ENCODE measurements at regions of chr5 and their contacts with region 1.

Region 1: DNA sequence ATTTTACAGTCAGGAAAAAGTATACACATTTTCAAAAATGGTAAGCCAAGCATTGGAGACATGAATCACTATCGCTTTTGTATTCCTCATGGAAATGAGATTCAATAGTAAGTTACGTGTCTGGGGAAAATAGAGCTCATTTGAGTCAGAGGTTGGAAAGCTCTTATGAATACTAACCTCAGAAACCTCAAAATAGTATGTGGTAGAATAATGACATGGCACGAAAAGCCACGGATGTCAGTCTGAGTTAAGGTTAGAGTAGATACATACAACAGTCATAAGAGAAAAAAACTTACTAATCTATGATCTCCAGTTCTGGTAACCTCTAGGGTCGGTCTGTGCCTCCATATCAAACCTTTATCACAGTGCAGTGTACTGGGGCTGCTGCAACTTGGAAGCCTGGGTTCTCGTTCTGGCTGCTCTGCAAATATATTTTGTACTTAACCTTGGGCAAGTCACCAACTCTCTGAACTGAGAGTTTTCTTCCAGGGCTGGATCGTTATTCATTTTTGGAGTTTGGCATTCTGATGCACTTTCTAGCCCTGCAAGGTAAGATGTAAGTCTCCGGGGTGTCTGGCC is 31.8 kb downstream of the MAP1B start:
- DNase-seq: peak; percentile 97
- ATAC-seq: peak; percentile 38
- H3K4me3 ChIP-seq: no peak overlapping the region
- H3K27ac ChIP-seq: peak overlapping the region; percentile 83
- H3K4me1 ChIP-seq: peaks cover 19% of the 10 kb centered on the region
- H3K27me3 ChIP-seq: no peaks in the 10 kb centered on the region
- CTCF ChIP-seq: no peak
- POLR2A ChIP-seq: no peak
- RAD21 ChIP-seq: no peak

Region 2: GRCh38 chr5:72191404-72191803 is 52.4 kb after region 1 on chr5:
- CTCF ChIA-PET with region 1: no interaction called
- POLR2A ChIA-PET with region 1: no interaction called
- dilution Hi-C with region 1: no loop called
- in situ Hi-C with region 1: no loop called
- intact Hi-C with region 1: no loop called
- DNase-seq: no peak
- ATAC-seq: peak; percentile 42
- H3K4me3 ChIP-seq: no peak overlapping the region
- H3K27ac ChIP-seq: no peak overlapping the region
- H3K4me1 ChIP-seq: peaks cover 5% of the 10 kb centered on the region
- H3K27me3 ChIP-seq: no peaks in the 10 kb centered on the region
- CTCF ChIP-seq: no peak
- POLR2A ChIP-seq: no peak
- RAD21 ChIP-seq: no peak

Region 3: GRCh38 chr5:72209515-72210115 is 70.6 kb after region 1 on chr5:
- CTCF ChIA-PET with region 1: no interaction called
- POLR2A ChIA-PET with region 1: no interaction called
- dilution Hi-C with region 1: no loop called
- in situ Hi-C with region 1: no loop called
- intact Hi-C with region 1: loop called (anchors 5 kb)
- DNase-seq: no peak
- ATAC-seq: no peak
- H3K4me3 ChIP-seq: no peak overlapping the region
- H3K27ac ChIP-seq: no peak overlapping the region
- H3K4me1 ChIP-seq: peaks cover 23% of the 10 kb centered on the region
- H3K27me3 ChIP-seq: no peaks in the 10 kb centered on the region
- CTCF ChIP-seq: no peak
- POLR2A ChIP-seq: no peak
- RAD21 ChIP-seq: no peak

Region 4: DNA sequence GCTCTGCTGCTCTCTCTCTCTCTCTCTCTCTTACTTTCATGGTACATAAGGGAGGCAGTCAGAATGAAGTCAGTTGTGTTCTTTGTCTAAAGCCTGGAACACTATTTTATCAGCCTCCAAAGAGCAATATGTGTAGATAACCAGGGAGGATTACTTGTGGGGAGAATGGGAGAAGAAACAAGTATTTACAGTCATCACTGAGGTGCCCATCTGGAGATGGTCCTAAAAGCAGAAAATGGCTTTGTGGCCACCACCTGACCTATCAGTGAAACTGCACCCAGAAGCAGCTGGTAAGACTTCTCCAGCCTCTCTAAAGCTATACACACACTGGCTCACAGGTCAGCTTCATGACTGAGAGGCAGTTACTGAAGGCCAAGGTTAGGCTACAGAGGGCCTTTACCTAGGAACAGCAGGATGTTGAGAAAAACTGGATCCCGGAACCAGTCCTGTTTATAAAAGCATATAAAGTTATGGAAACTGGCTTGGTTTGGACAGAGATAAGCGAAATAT is 105.9 kb after region 1 on chr5:
- CTCF ChIA-PET with region 1: no interaction called
- POLR2A ChIA-PET with region 1: no interaction called
- dilution Hi-C with region 1: no loop called
- in situ Hi-C with region 1: no loop called
- intact Hi-C with region 1: loop called (anchors 5 kb)
- DNase-seq: peak; percentile 61
- ATAC-seq: peak; percentile 77
- H3K4me3 ChIP-seq: no peak overlapping the region
- H3K27ac ChIP-seq: no peak overlapping the region
- H3K4me1 ChIP-seq: peaks cover 14% of the 10 kb centered on the region; the same call in 1 of the 2 replicates
- H3K27me3 ChIP-seq: no peaks in the 10 kb centered on the region
- CTCF ChIP-seq: peak; percentile 47
- POLR2A ChIP-seq: no peak
- RAD21 ChIP-seq: peak; percentile 54

Region 5: DNA sequence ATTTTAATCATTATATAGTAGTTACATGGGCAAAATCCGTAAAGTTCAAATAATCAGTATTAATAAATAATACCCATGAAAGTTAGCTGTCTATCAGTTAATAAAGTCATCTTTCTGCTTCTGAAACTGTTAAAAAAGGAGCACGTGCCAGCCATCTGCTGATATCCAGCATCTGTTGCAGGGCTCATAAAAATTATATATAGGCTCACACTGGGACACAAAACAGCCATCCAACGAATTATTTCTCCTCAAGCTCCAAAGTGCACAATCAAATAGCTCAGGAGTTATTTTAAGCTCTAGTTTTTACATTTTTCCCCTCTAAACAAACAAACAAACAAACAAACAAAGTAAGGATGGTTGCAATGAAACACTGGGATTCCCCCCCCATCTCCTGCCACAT is 132.7 kb after region 1 on chr5:
- CTCF ChIA-PET with region 1: no interaction called
- POLR2A ChIA-PET with region 1: no interaction called
- dilution Hi-C with region 1: no loop called
- in situ Hi-C with region 1: no loop called
- intact Hi-C with region 1: loop called (anchors 10 kb)
- DNase-seq: no peak
- ATAC-seq: no peak
- H3K4me3 ChIP-seq: no peak overlapping the region
- H3K27ac ChIP-seq: no peak overlapping the region
- H3K4me1 ChIP-seq: no peaks in the 10 kb centered on the region
- H3K27me3 ChIP-seq: no peaks in the 10 kb centered on the region
- CTCF ChIP-seq: no peak
- POLR2A ChIP-seq: no peak
- RAD21 ChIP-seq: no peak